ENCODE measurements at regions of chr2 and their contacts with region 1.

Region 1: GRCh38 chr2:113122364-113122763 is 5.0 kb upstream of the IL1RN start:
- DNase-seq: no peak
- H3K27ac ChIP-seq: no peak overlapping the region
- CTCF ChIP-seq: no peak

Region 2: DNA sequence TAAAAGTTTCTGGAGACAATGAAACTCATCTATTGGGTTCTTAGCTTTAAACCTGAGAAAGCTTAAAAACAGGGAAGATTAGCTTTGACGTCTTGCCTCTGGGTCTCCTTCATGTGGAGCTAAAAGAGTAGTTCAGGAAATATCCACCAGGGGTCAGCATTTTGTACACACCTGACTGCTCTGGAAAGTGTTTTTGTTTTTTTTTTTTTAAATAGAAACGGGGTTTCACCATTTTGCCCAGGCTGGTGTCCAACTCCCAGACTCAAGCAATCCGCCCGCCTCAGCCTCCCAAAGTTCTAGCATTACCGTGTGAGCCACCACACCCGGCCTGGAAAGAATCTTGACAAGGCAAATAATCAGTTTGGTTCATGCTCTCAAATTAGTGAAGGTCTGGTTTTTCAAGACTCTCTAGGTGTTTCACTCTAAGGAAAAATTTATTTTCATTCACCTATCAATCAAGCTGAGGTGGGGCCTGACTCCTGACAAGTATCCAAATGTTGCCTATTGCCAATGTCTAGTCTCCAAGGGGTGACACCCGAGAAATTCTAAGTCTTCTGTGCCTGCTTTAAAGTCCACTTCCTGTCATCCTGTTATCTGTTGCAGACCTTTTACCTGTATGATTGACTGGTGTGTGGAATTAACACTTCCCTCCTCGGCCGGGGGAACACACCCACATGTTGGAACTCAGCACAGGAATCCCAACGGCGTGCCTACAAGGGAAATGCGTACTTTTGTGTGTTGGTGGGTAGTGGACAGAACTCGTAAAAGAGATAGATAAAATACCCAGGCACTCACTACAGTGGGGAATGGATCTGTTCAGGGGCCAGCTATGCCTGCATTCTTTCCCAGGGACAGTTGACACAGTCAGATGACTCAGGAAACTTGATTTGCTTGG is 16.3 kb after region 1 on chr2:
- CTCF ChIA-PET with region 1: interaction called, 10 read pairs
- POLR2A ChIA-PET with region 1: no interaction called
- DNase-seq: peak; percentile 68
- H3K27ac ChIP-seq: no peak overlapping the region
- CTCF ChIP-seq: peak; percentile 84

Measured in RWPE1 (cell line).